Caco-2 (cell line): ENCODE measurements at regions of chr12 and their contacts with region 1.

Region 1: GRCh38 chr12:22610131-22610530 is 14.8 kb upstream of the ETNK1 start:
- DNase-seq: no peak
- H3K4me3 ChIP-seq: no peak overlapping the region
- H3K4me3 Mint-ChIP-seq: no peak overlapping the region
- H3K27ac Mint-ChIP-seq: no peak overlapping the region
- H3K4me1 ChIP-seq: no peaks in the 10 kb centered on the region
- H3K4me1 Mint-ChIP-seq: no peaks in the 10 kb centered on the region
- H3K27me3 ChIP-seq: no peaks in the 10 kb centered on the region
- H3K27me3 Mint-ChIP-seq: no peaks in the 10 kb centered on the region
- CTCF ChIP-seq: no peak

Region 2: DNA sequence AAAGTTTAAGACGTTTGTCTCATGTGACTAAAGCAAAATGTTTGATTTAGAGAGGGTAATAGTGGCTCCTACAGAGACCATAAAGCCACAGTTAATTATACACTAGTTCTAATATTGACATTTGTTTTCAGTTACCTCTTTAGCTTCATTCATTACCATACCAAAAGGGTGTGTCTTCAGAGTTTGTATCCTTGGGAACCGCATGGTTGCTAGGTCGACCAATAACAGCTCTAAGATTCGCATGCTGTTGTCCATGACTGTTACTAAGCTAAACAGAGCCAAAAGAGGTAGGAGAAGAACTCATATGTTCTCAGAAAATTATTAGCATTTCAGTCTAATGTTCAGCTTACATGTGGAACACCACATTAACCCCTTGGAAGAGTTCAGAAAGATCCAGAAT is 21.3 kb before region 1 on chr12:
- CTCF ChIA-PET with region 1: no interaction called
- POLR2A ChIA-PET with region 1: interaction called, 10 read pairs
- intact Hi-C with region 1: no loop called
- DNase-seq: peak in 1 of 2 experiments; percentile 47
- H3K4me3 ChIP-seq: no peak overlapping the region
- H3K4me3 Mint-ChIP-seq: no peak overlapping the region
- H3K27ac Mint-ChIP-seq: no peak overlapping the region
- H3K4me1 ChIP-seq: no peaks in the 10 kb centered on the region
- H3K4me1 Mint-ChIP-seq: peaks cover 3% of the 10 kb centered on the region
- H3K27me3 ChIP-seq: no peaks in the 10 kb centered on the region
- H3K27me3 Mint-ChIP-seq: no peaks in the 10 kb centered on the region
- CTCF ChIP-seq: no peak